ENCODE measurements at regions of chr1 and their contacts with region 1.

Region 1: GRCh38 chr1:47997289-47998200 is at the start of gene TRABD2B:
- DNase-seq: peak; percentile 63
- ATAC-seq: peak; percentile 86
- H3K4me3 Mint-ChIP-seq: peak within 1 kb of the TSS; percentile 31
- H3K27ac Mint-ChIP-seq: no peak within 1 kb of the TSS
- H3K4me1 Mint-ChIP-seq: peaks cover 2% of the 10 kb centered on the region
- H3K27me3 Mint-ChIP-seq: peaks cover 52% of the 10 kb centered on the region
- total RNA-seq, gene TRABD2B: not detected

Region 2: DNA sequence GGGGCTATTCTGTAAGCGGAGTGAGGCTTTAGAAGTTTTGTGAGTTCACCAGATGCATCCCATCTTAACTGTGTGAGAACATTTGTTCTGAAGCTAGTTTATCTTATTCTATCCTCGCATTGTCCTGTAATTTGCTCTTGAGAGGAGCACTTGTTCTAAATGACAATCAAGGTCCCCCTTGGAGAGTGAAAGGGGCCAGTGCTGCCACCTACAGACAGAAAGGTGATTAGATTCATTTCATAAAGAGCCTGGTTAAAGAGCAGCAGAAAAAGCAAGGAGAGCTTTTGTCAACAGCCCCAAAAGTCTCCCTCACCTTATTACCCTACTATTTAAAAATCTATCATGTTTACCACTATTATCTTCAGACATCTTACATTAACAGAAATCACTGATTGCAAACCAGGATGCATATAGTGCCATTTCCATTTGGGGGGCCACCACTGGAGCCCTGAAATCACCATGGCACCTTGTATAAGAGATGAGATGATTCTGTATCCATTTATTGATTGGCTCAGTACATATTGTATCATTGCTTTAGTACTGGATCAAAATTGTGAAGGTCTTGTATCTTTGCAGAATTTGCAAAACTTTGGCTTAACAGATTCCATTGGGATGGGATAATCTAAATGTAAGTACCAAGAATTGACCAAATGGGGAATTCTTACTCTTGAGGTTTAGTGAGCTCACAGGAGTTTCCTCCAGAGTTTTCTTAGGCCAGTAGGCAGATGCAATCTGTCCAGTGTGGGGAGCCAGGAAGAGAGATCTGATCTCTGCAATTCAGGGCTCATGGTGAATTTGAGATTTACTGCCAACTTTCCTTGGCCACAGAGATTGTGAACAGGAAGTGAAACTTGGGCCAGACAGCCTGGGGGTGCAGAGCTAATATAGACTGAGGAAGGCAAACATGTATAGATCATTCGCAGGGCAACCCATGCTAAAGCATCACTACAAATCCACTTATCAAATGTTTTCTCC is 63.9 kb after region 1 on chr1:
- CTCF ChIA-PET with region 1: interaction called, 25 read pairs
- DNase-seq: no peak
- ATAC-seq: no peak
- H3K4me3 Mint-ChIP-seq: no peak overlapping the region
- H3K27ac Mint-ChIP-seq: no peak overlapping the region
- H3K4me1 Mint-ChIP-seq: no peaks in the 10 kb centered on the region
- H3K27me3 Mint-ChIP-seq: no peaks in the 10 kb centered on the region